ENCODE measurements at regions of chr1 and their contacts with region 1.

Region 1: GRCh38 chr1:23743287-23744052 is at the start of gene ELOA:
- DNase-seq: peak; percentile 83
- H3K4me3 ChIP-seq: peak within 1 kb of the TSS; percentile 78 to 98 (median 96)
- H3K27ac ChIP-seq: peak within 1 kb of the TSS; percentile 93 to 95 (median 94)
- H3K4me1 ChIP-seq: peaks cover 0 to 39% (median 24%) of the 10 kb centered on the region in 4 donors
- H3K27me3 ChIP-seq: no peaks in the 10 kb centered on the region
- CTCF ChIP-seq: no peak
- EP300 ChIP-seq: no peak
- POLR2A ChIP-seq: peak in 1 of 2 donors; percentile 43
- total RNA-seq, gene ELOA: 25.7 to 29.9 (median 26.7) TPM

Region 2: DNA sequence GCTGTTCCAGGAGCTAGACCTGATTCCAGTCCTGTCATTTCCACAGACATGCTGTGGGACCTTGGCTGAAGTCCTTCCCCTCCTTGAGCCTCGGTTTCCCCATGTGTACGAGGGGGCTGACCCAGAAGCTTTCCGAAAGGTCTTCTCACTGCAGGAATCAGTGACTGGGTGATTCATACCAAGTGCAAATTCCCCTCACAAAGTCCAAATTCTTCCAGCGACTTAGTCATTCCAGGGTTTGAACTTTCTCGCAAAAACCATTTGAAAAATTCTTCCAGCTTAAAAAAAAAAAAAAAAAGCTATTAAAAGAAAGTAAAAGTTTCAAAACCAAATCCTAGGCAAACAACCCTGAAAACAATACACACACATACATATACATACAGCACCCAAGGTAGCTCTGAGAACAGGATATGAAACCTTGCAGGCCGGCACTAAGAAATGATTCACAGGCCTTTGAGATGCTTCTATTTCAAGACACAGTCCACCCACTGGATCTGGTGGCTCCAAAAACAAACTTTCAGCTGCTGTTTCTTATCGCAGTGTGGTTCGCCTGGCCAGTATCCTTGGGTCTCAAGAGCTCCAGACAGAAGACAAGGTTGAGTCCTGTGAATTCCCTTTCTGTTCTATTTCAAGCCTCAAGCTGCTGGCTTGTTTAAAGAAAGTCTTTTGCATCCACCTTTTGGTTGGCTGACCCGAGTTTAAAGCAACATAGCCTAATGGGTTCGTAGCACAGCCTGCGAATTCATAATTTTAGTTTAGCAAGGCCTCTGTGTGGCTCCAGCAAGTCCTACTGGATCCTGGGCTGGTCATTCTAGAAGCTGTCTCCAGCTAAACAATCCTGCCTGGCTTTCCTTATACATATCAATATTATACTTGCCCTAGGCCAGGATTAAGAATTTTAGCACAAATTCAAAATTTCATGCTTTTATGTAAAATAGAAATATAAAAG is 166.1 kb before region 1 on chr1:
- intact Hi-C with region 1: no loop called
- DNase-seq: peak; percentile 76
- H3K4me3 ChIP-seq: peak overlapping the region in 2 of 4 donors; percentile 7 to 8
- H3K27ac ChIP-seq: peak overlapping the region; percentile 78 to 85 (median 84)
- H3K4me1 ChIP-seq: peaks cover 3 to 36% (median 33%) of the 10 kb centered on the region in 4 donors
- H3K27me3 ChIP-seq: no peaks in the 10 kb centered on the region
- CTCF ChIP-seq: no peak
- EP300 ChIP-seq: peak in 2 of 4 donors; percentile 15 to 25
- POLR2A ChIP-seq: no peak

Region 3: DNA sequence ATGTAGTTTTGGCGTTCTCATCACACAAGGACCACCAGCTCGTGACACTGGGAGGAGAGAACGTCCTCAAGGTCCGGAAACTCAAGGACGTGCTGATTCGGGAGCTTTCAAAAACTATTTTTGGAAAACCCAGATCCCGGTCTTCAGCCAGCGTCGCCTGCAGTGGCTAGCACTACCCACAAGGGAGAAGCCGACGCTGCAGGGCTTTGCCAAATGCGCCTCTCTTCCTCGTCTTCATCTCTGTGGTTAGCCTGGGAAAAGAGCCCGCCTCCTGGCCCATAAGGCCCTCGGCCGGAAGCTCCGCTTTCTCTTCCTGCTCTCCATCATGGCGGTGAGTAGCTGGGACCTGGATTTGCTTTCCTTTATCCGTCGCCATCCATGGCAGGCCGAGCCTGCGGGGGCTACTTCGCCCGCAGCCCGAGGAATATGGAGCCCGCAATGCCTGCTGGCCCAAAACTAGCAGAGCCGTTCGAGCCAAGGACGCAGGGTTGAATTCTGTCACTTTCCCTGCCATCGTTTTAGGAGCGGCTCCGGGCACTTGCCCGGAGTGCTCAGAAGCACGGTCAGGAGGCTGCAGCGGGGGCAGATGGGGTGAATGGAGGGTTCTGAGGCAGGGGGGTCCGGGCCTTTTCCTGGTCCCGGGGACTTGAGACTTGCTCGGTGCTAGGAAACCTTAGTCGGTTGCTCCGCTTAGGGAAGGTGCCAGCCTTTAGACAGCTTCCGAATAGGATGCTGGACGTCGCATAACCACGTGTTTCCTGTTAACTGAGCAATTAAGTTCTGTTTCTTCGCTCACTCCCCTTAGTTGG is 51.8 kb before region 1 on chr1 and contains the start of gene RPL11:
- intact Hi-C with region 1: loop called (anchors 5 kb)
- DNase-seq: peak; percentile 97
- H3K4me3 ChIP-seq: peak within 1 kb of the TSS; percentile 74 to 90 (median 76)
- H3K27ac ChIP-seq: peak within 1 kb of the TSS; percentile 84 to 91 (median 86)
- H3K4me1 ChIP-seq: peaks cover 0 to 49% (median 37%) of the 10 kb centered on the region in 4 donors
- H3K27me3 ChIP-seq: no peaks in the 10 kb centered on the region
- CTCF ChIP-seq: peak; percentile 66 to 87 (median 80)
- EP300 ChIP-seq: no peak
- POLR2A ChIP-seq: peak; percentile 80 to 85
- total RNA-seq, gene RPL11: 735 to 1,309 (median 1,008) TPM

Region 4: GRCh38 chr1:23923592-23924499 is 180.4 kb after region 1 on chr1:
- intact Hi-C with region 1: no loop called
- DNase-seq: no peak
- H3K4me3 ChIP-seq: no peak overlapping the region
- H3K27ac ChIP-seq: no peak overlapping the region
- H3K4me1 ChIP-seq: peaks cover 0 to 21% (median 21%) of the 10 kb centered on the region in 4 donors
- H3K27me3 ChIP-seq: no peaks in the 10 kb centered on the region
- CTCF ChIP-seq: no peak
- EP300 ChIP-seq: no peak
- POLR2A ChIP-seq: no peak